Posterior vena cava (tissue), 2 donors: ENCODE measurements at regions of chr1 and their contacts with region 1.

Region 1: GRCh38 chr1:77220687-77221463 is 1.6 kb upstream of the PIGK start:
- DNase-seq: no peak

Region 2: DNA sequence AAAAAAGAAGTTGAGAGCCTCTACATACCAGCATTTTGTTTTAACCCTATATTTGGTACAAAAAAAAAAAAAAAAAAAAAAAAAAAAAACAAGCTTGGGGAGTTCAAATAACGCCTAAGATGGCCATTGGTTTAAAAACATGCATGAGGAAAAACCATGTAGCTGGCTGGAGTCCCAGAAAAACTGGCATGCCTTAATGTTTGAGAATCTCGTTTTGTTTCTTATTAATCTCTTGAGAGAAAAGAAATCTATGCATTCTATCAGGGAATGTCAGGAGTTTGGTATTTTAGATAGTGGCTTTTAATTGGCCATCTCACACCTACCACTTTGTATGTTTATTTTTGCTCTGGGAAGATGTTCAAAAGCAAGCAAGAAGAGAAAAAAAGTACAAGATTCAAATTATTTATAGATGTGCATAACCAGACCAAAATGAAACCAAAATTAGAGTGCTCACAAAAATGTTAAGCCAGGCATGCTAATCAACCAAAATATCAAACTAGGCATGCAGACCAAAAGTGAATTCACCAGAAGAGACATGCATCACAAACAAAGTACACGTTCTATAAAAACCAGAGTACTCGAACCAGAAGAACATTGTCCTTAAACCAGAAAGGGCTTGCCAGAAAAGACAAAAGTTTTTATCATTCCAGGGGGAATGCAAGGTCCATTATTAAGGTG is 217.5 kb after region 1 on chr1:
- intact Hi-C with region 1: loop called in 1 of 2 experiments (anchors 10 kb)
- DNase-seq: no peak